Ascending aorta (tissue), 2 donors: ENCODE measurements at regions of chr22 and their contacts with region 1.

Region 1: DNA sequence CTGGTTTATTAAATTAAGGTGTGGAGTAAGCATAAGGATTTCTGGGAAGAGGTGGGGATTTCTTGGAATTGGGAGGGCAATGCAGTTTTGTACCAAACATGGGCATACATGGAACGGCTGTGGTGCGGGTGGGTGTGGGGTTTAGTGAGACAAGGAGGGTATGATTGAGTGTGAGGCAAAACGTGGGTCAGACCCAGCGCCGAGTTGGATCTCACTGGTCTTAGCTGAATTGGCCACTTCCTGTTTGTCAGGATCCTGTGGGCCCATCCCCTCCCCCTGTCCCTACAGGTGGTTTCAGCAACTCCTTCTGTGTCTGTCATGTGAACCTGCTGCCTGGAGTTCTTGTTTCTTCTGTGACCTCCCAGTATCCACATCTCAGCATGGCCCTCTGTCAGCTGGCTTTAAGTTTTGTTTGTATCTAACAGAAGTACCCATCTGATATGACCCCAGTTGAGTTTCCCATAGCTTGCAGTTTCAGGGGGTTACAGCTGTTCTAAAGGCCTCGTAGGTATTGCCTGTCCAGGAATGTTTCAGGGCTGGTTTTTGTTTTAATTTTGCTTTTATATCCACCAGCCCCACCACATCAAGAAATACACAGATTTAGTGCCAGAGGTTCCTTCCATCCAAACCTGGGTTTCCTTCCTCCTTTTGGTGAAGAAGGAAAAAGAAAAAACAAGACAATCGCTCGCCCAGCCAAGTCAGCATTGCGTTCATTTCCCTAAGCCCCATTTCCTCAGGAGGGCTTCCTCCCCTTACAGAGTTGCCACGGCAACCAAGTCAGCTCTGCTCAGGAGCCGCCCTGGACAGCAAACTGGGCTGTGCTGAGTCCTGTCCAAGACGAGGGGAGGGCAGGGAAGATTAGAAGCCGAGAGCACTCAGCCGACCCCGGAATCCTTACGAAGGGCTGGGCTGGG is 6.0 kb downstream of the APOL1 start:
- DNase-seq: no peak
- H3K4me3 ChIP-seq: no peak overlapping the region
- H3K27ac ChIP-seq: peak overlapping the region in 1 of 2 donors; percentile 50
- H3K4me1 ChIP-seq: peaks cover 0 to 12% of the 10 kb centered on the region in 2 donors
- H3K27me3 ChIP-seq: no peaks in the 10 kb centered on the region
- CTCF ChIP-seq: no peak

Region 2: DNA sequence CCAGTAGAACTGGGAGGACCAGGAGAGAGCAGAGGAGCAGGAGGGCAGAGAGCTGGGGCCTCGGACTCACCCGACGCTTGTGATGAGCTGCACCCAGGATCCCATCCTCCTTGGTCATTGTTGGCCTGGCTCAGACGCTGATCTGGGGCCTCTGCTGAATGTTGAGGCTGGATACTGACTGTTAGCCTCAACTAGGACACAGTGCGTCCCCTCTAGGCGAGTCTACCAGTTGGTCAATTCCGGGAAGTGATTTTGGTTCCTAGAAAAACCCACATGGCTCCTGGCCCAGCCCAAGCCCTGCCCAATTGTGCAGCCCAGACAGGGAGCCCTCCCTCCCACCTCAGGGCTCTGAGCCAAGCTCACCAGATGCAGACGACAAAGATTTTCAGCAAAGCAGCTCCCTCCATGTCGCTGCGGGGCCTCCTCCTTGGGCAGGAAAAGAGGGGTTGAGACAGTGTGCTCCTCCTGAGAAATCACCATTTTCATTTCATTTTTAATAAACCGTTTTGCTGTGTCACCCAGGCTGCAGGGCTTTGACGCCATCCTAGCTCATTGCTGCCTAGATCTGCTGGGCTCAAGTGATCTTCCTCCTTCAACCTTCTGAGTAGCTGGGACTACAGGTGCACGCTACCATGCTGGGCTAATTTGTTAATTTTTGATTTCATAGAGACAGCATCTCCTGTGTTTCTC is 57.2 kb before region 1 on chr22 and contains the start of gene APOL4:
- intact Hi-C with region 1: loop called (anchors 5 kb)
- DNase-seq: peak in 1 of 2 donors; percentile 73
- H3K4me3 ChIP-seq: no peak within 1 kb of the TSS
- H3K27ac ChIP-seq: no peak within 1 kb of the TSS
- H3K4me1 ChIP-seq: no peaks in the 10 kb centered on the region
- H3K27me3 ChIP-seq: no peaks in the 10 kb centered on the region
- CTCF ChIP-seq: no peak
- total RNA-seq, gene APOL4: not detected

Region 3: DNA sequence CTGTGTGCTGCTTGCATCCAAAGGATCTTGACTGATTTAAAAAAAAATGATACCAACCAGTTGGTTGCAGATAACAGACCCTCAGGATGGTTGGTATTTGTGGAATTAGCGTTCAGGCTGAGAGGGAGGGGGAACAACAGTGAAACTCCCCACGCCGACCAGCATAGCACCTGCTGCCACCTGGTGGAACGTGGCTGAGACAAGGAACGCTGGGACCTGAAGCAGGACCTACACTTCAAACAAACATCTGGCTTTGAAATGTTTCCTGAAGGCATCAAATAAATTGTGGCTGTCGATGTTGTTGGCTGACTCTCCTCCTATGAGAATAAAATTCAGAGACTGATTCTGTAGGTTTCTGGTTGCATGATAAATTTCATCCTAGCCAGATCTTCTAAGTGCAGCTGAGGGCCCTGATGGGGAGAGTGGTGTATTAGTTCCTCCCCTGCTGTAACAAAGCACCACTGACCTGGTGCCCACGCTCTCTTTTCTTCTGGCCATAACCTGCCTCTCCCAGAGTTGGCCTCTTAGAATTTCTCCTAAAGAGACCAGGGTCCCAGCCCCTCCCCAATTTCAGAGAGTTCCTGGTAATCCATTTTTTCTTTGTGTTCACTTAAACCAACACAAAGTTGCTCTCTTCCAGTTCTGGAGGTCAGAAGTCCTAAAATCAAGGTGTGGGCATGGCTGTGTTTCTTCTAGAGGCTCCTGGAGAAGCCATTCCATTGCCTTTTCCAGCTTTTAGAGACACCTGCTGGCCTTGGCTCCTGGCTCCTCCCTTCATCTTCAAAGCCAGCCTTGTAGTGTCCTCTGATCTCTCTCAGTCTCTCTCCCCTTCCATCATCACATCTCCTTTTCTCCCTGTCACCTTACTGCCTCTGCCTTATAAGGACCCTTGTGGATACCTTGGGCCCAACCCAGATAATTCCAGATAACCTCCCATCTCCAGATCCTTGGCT is 36.9 kb before region 1 on chr22:
- intact Hi-C with region 1: no loop called
- DNase-seq: no peak
- H3K4me3 ChIP-seq: no peak overlapping the region
- H3K27ac ChIP-seq: no peak overlapping the region
- H3K4me1 ChIP-seq: peaks cover 0 to 3% of the 10 kb centered on the region in 2 donors
- H3K27me3 ChIP-seq: no peaks in the 10 kb centered on the region
- CTCF ChIP-seq: peak; percentile 30 to 56 (median 47)

Region 4: GRCh38 chr22:36510966-36511881 is 252.3 kb after region 1 on chr22:
- intact Hi-C with region 1: no loop called
- DNase-seq: no peak
- H3K4me3 ChIP-seq: no peak overlapping the region
- H3K27ac ChIP-seq: no peak overlapping the region
- H3K4me1 ChIP-seq: peaks cover 6 to 8% of the 10 kb centered on the region in 2 donors
- H3K27me3 ChIP-seq: no peaks in the 10 kb centered on the region
- CTCF ChIP-seq: peak in 2 of 3 experiments; percentile 35 to 42

Region 5: GRCh38 chr22:36546092-36546804 is 287.3 kb after region 1 on chr22:
- intact Hi-C with region 1: no loop called
- DNase-seq: no peak
- H3K4me3 ChIP-seq: no peak overlapping the region
- H3K27ac ChIP-seq: no peak overlapping the region
- H3K4me1 ChIP-seq: no peaks in the 10 kb centered on the region
- H3K27me3 ChIP-seq: no peaks in the 10 kb centered on the region
- CTCF ChIP-seq: peak in 1 of 3 experiments; percentile 50